CD4-positive, alpha-beta memory T cell (primary cell): ENCODE measurements at regions of chr19 and their contacts with region 1.

Region 1: DNA sequence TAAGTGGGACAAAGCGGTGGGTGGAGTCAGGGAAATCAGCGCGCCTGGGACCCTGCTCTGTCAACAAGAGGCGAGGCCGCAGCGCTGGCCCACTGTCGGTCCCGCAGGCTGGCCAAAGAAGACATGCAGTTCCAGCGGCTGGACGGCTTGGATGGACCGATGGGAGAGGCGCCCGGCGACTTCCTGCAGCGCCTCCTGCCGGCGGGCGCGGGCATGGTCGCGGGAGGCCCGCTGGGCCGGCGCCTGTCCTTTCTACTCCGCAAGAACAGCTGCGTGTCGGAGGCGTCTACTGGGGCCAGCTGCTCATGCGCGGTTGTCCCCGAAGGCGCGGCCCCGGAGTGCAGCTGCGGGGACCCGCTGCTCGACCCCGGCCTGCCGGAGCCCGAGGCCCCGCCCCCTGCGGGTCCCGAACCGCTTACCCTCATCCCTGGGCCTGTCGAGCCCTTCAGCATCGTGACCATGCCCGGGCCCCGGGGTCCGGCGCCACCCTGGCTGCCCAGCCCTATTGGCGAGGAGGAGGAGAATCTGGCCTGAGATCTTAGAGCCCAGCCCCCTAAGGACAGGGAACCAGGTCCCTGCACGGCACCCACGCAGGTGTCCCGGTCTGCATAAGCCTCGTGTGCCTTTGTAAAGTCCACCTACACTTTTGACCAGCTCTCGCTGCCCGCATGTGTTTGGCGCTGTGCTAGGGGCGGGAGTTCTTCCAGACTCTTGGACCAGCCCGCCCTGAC is 6.1 kb downstream of the BEST2 start:
- DNase-seq: peak in 4 of 5 donors; percentile 56 to 61 (median 58)
- H3K4me3 ChIP-seq: no peak overlapping the region
- H3K4me3 Mint-ChIP-seq: peak overlapping the region in 5 of 8 donors; percentile 5 to 41 (median 32)
- H3K27ac ChIP-seq: no peak overlapping the region
- H3K27ac Mint-ChIP-seq: no peak overlapping the region
- H3K4me1 ChIP-seq: peaks cover 3% of the 10 kb centered on the region
- H3K4me1 Mint-ChIP-seq: peaks cover 4 to 10% (median 5%) of the 10 kb centered on the region in 4 donors
- H3K27me3 ChIP-seq: no peaks in the 10 kb centered on the region
- H3K27me3 Mint-ChIP-seq: peaks cover 1 to 7% of the 10 kb centered on the region in 2 donors

Region 2: DNA sequence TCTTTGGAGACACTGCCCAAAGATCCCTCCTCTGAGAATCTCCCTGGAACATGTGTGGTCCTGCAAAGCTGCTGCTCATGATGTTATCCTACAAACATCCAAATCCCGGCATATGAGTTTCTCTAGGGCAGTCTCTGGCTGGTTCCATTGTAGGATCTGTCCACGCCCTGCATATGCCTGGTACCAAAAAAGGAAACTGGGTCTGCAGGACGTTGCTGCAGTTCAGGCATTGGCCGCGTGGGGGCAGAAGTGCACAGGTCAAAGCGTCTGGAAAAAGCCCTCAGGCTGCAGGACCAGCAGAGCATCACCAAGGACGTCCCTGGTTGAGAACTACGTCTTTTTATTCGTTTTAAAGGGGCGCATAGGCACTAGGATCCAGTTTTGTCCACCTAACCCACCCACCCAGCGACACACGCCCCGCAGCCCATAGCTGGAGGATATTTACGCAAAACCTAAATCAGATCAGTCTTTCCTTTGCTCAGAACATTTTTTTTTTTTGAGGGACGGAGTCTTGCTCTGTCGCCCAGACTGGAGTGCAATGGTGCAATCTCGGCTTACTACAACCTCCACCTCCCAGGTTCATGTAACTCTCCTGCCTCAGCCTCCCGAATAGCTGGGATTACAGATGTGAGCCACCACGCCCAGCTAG is 193.6 kb before region 1 on chr19:
- CTCF ChIA-PET with region 1: interaction called, 8 read pairs
- POLR2A ChIA-PET with region 1: no interaction called
- intact Hi-C with region 1: loop called (anchors 1 kb)
- DNase-seq: peak; percentile 84 to 90 (median 85)
- H3K4me3 ChIP-seq: no peak overlapping the region
- H3K4me3 Mint-ChIP-seq: peak overlapping the region in 1 of 8 donors; percentile 33
- H3K27ac ChIP-seq: no peak overlapping the region
- H3K27ac Mint-ChIP-seq: peak overlapping the region in 1 of 7 donors; percentile 53
- H3K4me1 ChIP-seq: no peaks in the 10 kb centered on the region
- H3K4me1 Mint-ChIP-seq: peaks cover 4 to 5% (median 5%) of the 10 kb centered on the region in 4 donors
- H3K27me3 ChIP-seq: no peaks in the 10 kb centered on the region
- H3K27me3 Mint-ChIP-seq: no peaks in the 10 kb centered on the region

Region 3: DNA sequence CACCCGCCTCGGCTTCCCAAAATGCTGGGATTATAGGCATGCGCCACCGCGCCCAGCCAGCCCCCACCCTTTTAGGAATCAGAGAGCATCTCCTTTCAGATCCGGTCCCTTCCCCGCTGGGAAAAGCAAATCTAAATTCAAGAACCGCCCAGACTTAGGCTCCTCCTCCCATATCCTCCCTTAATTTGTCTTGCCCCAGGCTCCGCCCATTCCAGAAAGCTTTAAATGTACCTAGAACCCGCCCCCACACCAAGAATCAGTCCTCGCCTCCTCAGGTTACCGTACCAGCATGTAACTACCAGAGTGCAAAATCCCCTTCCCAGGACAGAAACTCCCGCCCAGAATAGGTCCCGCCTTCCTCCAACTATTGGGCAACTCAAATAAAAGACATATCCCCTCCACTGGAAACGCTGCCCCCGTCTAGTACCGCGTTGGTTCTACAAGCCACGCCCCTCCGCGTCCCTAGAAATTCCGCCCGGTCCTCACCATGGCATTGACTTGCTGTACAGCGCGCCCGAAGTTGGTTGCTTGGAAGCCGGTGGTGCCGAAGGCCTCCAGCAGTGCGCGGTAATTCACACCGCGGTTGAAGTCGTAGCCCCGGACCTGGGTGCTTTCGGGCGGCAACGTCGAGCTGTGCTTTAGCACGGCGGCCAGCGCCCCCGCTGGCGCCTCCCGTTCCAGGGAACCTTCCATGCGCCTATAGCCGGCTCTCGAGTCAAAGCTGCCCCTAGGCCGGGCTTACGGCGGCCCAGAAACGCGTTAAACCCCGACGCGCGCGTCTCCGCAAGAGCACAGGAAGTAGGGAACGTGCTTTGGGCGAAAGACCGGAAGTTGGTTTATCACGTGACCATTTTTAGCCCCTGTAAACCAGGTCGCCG is 76.4 kb before region 1 on chr19 and contains the start of gene DHPS:
- CTCF ChIA-PET with region 1: interaction called, 9 read pairs
- POLR2A ChIA-PET with region 1: interaction called, 4 read pairs
- intact Hi-C with region 1: loop called (anchors 1 kb)
- DNase-seq: peak; percentile 90 to 96 (median 94)
- H3K4me3 ChIP-seq: peak within 1 kb of the TSS; percentile 73 to 98
- H3K4me3 Mint-ChIP-seq: peak within 1 kb of the TSS; percentile 90 to 99 (median 98)
- H3K27ac ChIP-seq: peak within 1 kb of the TSS; percentile 98
- H3K27ac Mint-ChIP-seq: peak within 1 kb of the TSS; percentile 83 to 99 (median 97)
- H3K4me1 ChIP-seq: peaks cover 22% of the 10 kb centered on the region
- H3K4me1 Mint-ChIP-seq: peaks cover 12 to 35% (median 25%) of the 10 kb centered on the region in 4 donors
- H3K27me3 ChIP-seq: no peaks in the 10 kb centered on the region
- H3K27me3 Mint-ChIP-seq: no peaks in the 10 kb centered on the region
- total RNA-seq, gene DHPS: 195 to 197 TPM

Region 4: GRCh38 chr19:12716861-12717260 is 40.8 kb before region 1 on chr19:
- CTCF ChIA-PET with region 1: interaction called, 126 read pairs
- POLR2A ChIA-PET with region 1: no interaction called
- intact Hi-C with region 1: loop called (anchors 1 kb)
- DNase-seq: peak; percentile 38 to 62 (median 54)
- H3K4me3 ChIP-seq: no peak overlapping the region
- H3K4me3 Mint-ChIP-seq: peak overlapping the region in 1 of 8 donors; percentile 23
- H3K27ac ChIP-seq: no peak overlapping the region
- H3K27ac Mint-ChIP-seq: peak overlapping the region in 3 of 7 donors; percentile 18 to 48 (median 23)
- H3K4me1 ChIP-seq: peaks cover 13% of the 10 kb centered on the region
- H3K4me1 Mint-ChIP-seq: peaks cover 12 to 30% (median 17%) of the 10 kb centered on the region in 4 donors
- H3K27me3 ChIP-seq: no peaks in the 10 kb centered on the region
- H3K27me3 Mint-ChIP-seq: no peaks in the 10 kb centered on the region

Region 5: DNA sequence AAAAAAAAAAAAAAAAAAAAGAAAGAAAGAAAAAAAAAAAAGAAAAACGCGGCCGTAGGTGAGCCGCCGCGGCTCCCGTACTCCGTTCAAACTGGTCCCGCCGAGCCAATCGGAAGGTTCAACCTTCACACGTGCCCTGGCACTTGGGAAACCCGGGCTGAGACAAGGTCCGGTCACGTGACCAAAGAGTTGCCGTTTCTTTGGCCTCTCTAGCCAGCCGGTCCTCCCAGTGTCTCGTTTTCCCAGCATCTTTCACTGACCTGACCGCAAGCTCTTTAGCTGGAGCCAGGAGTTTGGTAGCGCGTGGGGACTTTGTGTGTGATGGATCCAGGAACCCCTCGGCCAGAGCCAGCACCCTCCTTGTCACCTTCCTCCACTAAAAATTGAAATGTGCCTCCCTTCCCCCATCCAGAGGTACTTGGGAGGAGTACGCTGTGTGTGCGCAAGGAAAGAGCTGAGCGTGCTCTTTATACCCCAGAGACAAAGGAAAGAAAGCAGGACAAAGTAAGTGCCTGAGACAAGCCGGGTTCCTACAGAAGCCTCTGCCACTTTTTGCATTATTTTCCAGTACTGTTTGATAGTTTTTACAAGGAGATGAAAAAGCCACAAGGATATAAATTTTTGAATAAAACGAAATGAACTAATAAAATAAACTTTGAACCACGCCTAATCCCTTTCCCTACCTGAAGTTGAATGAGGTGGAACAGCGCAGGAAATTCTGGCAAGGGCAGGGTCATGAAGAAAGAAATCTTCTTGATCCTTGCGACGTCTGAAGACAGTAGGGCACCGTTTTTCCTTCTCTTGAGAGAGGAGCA is 34.9 kb before region 1 on chr19:
- CTCF ChIA-PET with region 1: interaction called, 126 read pairs
- POLR2A ChIA-PET with region 1: interaction called, 4 read pairs
- intact Hi-C with region 1: loop called (anchors 1 kb)
- DNase-seq: peak; percentile 91 to 97 (median 95)
- H3K4me3 ChIP-seq: peak overlapping the region; percentile 21 to 78
- H3K4me3 Mint-ChIP-seq: peak overlapping the region; percentile 87 to 98 (median 92)
- H3K27ac ChIP-seq: peak overlapping the region; percentile 73
- H3K27ac Mint-ChIP-seq: peak overlapping the region; percentile 88 to 98 (median 93)
- H3K4me1 ChIP-seq: peaks cover 30% of the 10 kb centered on the region
- H3K4me1 Mint-ChIP-seq: peaks cover 21 to 54% (median 35%) of the 10 kb centered on the region in 4 donors
- H3K27me3 ChIP-seq: no peaks in the 10 kb centered on the region
- H3K27me3 Mint-ChIP-seq: peaks cover 0 to 1% of the 10 kb centered on the region in 2 donors

Region 6: GRCh38 chr19:12736995-12737834 is 20.5 kb before region 1 on chr19 and contains the start of gene GET3:
- CTCF ChIA-PET with region 1: interaction called, 49 read pairs
- POLR2A ChIA-PET with region 1: interaction called, 4 read pairs
- intact Hi-C with region 1: no loop called
- DNase-seq: peak; percentile 87 to 91 (median 89)
- H3K4me3 ChIP-seq: peak within 1 kb of the TSS; percentile 77 to 80
- H3K4me3 Mint-ChIP-seq: peak within 1 kb of the TSS; percentile 98 to 100 (median 99)
- H3K27ac ChIP-seq: peak within 1 kb of the TSS; percentile 87
- H3K27ac Mint-ChIP-seq: peak within 1 kb of the TSS; percentile 94 to 98 (median 97)
- H3K4me1 ChIP-seq: peaks cover 40% of the 10 kb centered on the region
- H3K4me1 Mint-ChIP-seq: peaks cover 25 to 50% (median 36%) of the 10 kb centered on the region in 4 donors
- H3K27me3 ChIP-seq: no peaks in the 10 kb centered on the region
- H3K27me3 Mint-ChIP-seq: peaks cover 0 to 2% of the 10 kb centered on the region in 2 donors
- total RNA-seq, gene GET3: 30.8 to 34.5 TPM

Region 7: GRCh38 chr19:12777217-12778016 is 19.7 kb after region 1 on chr19:
- CTCF ChIA-PET with region 1: interaction called, 44 read pairs
- POLR2A ChIA-PET with region 1: interaction called, 3 read pairs
- intact Hi-C with region 1: no loop called
- DNase-seq: peak; percentile 77 to 83 (median 80)
- H3K4me3 ChIP-seq: peak overlapping the region; percentile 69 to 76
- H3K4me3 Mint-ChIP-seq: peak overlapping the region; percentile 85 to 92 (median 87)
- H3K27ac ChIP-seq: peak overlapping the region; percentile 86
- H3K27ac Mint-ChIP-seq: peak overlapping the region; percentile 92 to 97 (median 94)
- H3K4me1 ChIP-seq: peaks cover 42% of the 10 kb centered on the region
- H3K4me1 Mint-ChIP-seq: peaks cover 25 to 52% (median 35%) of the 10 kb centered on the region in 4 donors
- H3K27me3 ChIP-seq: no peaks in the 10 kb centered on the region
- H3K27me3 Mint-ChIP-seq: no peaks in the 10 kb centered on the region

Region 8: GRCh38 chr19:12930002-12930653 is 172.4 kb after region 1 on chr19:
- CTCF ChIA-PET with region 1: no interaction called
- POLR2A ChIA-PET with region 1: no interaction called
- intact Hi-C with region 1: no loop called
- DNase-seq: no peak
- H3K4me3 ChIP-seq: no peak overlapping the region
- H3K4me3 Mint-ChIP-seq: peak overlapping the region in 1 of 8 donors; percentile 17
- H3K27ac ChIP-seq: no peak overlapping the region
- H3K27ac Mint-ChIP-seq: no peak overlapping the region
- H3K4me1 ChIP-seq: peaks cover 24% of the 10 kb centered on the region
- H3K4me1 Mint-ChIP-seq: peaks cover 14 to 27% (median 22%) of the 10 kb centered on the region in 4 donors
- H3K27me3 ChIP-seq: no peaks in the 10 kb centered on the region
- H3K27me3 Mint-ChIP-seq: no peaks in the 10 kb centered on the region